ENCODE measurements at regions of chr5 and their contacts with region 1.

Region 1: GRCh38 chr5:43073597-43074546 is 33.8 kb upstream of the ANXA2R start:
- DNase-seq: peak in 7 of 9 experiments; percentile 22 to 77 (median 56)
- ATAC-seq: peak; percentile 92
- H3K4me3 ChIP-seq: no peak overlapping the region
- H3K4me3 Mint-ChIP-seq: no peak overlapping the region
- H3K27ac ChIP-seq: no peak overlapping the region
- H3K27ac Mint-ChIP-seq: no peak overlapping the region
- H3K4me1 ChIP-seq: peaks cover 16% of the 10 kb centered on the region
- H3K4me1 Mint-ChIP-seq: peaks cover 52% of the 10 kb centered on the region
- H3K27me3 ChIP-seq: no peaks in the 10 kb centered on the region
- H3K27me3 Mint-ChIP-seq: no peaks in the 10 kb centered on the region
- CTCF ChIP-seq: peak; percentile 68

Region 2: GRCh38 chr5:43244823-43245565 is 171.1 kb after region 1 on chr5:
- CTCF ChIA-PET with region 1: no interaction called
- POLR2A ChIA-PET with region 1: no interaction called
- intact Hi-C with region 1: no loop called
- DNase-seq: no peak
- ATAC-seq: no peak
- H3K4me3 ChIP-seq: no peak overlapping the region
- H3K4me3 Mint-ChIP-seq: no peak overlapping the region
- H3K27ac ChIP-seq: no peak overlapping the region
- H3K27ac Mint-ChIP-seq: no peak overlapping the region
- H3K4me1 ChIP-seq: no peaks in the 10 kb centered on the region
- H3K4me1 Mint-ChIP-seq: no peaks in the 10 kb centered on the region
- H3K27me3 ChIP-seq: peaks cover 0 to 3% of the 10 kb centered on the region in 2 experiments
- H3K27me3 Mint-ChIP-seq: peaks cover 19% of the 10 kb centered on the region
- CTCF ChIP-seq: no peak

Region 3: GRCh38 chr5:43305948-43306565 is 232.2 kb after region 1 on chr5:
- CTCF ChIA-PET with region 1: interaction called, 3 read pairs
- POLR2A ChIA-PET with region 1: no interaction called
- intact Hi-C with region 1: loop called (anchors 1 to 2 kb)
- DNase-seq: peak in 2 of 9 experiments; percentile 61 to 72
- ATAC-seq: peak; percentile 83
- H3K4me3 ChIP-seq: no peak overlapping the region
- H3K4me3 Mint-ChIP-seq: no peak overlapping the region
- H3K27ac ChIP-seq: peak overlapping the region in 1 of 2 experiments; percentile 12
- H3K27ac Mint-ChIP-seq: peak overlapping the region; percentile 5
- H3K4me1 ChIP-seq: peaks cover 4% of the 10 kb centered on the region
- H3K4me1 Mint-ChIP-seq: peaks cover 51% of the 10 kb centered on the region
- H3K27me3 ChIP-seq: no peaks in the 10 kb centered on the region
- H3K27me3 Mint-ChIP-seq: no peaks in the 10 kb centered on the region
- CTCF ChIP-seq: peak; percentile 75

Region 4: DNA sequence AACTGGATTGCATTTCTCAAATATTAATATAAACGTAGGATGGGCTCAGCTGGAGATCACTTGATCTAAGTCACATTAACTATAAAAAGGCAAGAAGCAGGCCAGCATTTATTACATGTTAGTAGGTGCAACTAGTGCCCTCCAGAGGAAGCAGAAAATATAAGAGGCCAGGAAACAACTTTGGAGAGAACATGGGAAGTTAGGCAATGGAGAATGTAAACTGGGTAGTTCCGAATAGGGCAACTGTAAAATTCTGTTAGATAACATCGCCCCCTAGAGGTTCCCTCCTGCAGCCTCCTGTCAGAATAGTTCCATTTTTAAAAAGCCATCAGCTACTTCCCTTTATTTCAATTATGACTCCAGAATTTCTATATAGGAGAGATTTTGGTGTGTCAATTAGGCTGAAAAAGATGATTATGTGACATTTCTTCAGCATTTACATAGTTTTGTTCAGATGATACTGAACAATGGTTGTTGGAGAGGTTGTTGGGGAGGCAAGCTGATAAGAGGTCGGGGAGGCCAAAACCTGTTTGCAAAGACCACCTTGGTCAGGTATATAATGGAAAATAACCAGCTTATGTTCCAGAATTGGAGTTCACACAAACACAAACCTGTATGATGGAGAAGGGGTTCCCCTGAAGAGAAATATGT is 315.9 kb after region 1 on chr5:
- CTCF ChIA-PET with region 1: interaction called, 3 read pairs
- POLR2A ChIA-PET with region 1: no interaction called
- intact Hi-C with region 1: loop called (anchors 2 to 5 kb)
- DNase-seq: peak in 7 of 9 experiments; percentile 11 to 73 (median 43)
- ATAC-seq: peak; percentile 64
- H3K4me3 ChIP-seq: no peak overlapping the region
- H3K4me3 Mint-ChIP-seq: no peak overlapping the region
- H3K27ac ChIP-seq: no peak overlapping the region
- H3K27ac Mint-ChIP-seq: no peak overlapping the region
- H3K4me1 ChIP-seq: no peaks in the 10 kb centered on the region
- H3K4me1 Mint-ChIP-seq: peaks cover 35% of the 10 kb centered on the region
- H3K27me3 ChIP-seq: no peaks in the 10 kb centered on the region
- H3K27me3 Mint-ChIP-seq: no peaks in the 10 kb centered on the region
- CTCF ChIP-seq: peak; percentile 87

Region 5: GRCh38 chr5:43514816-43515677 is 441.2 kb after region 1 on chr5 and contains the start of gene C5orf34:
- CTCF ChIA-PET with region 1: no interaction called
- POLR2A ChIA-PET with region 1: no interaction called
- intact Hi-C with region 1: loop called in 1 of 2 experiments (anchors 5 kb)
- DNase-seq: peak; percentile 84 to 97 (median 95)
- ATAC-seq: peak; percentile 86
- H3K4me3 ChIP-seq: peak within 1 kb of the TSS; percentile 68 to 77
- H3K4me3 Mint-ChIP-seq: peak within 1 kb of the TSS; percentile 97
- H3K27ac ChIP-seq: peak within 1 kb of the TSS; percentile 82
- H3K27ac Mint-ChIP-seq: peak within 1 kb of the TSS; percentile 95
- H3K4me1 ChIP-seq: peaks cover 15% of the 10 kb centered on the region
- H3K4me1 Mint-ChIP-seq: peaks cover 31% of the 10 kb centered on the region
- H3K27me3 ChIP-seq: no peaks in the 10 kb centered on the region
- H3K27me3 Mint-ChIP-seq: no peaks in the 10 kb centered on the region
- CTCF ChIP-seq: no peak
- total RNA-seq, gene C5orf34: 0.61 to 0.95 TPM